ENCODE measurements at regions of chr18 and their contacts with region 1.

Region 1: DNA sequence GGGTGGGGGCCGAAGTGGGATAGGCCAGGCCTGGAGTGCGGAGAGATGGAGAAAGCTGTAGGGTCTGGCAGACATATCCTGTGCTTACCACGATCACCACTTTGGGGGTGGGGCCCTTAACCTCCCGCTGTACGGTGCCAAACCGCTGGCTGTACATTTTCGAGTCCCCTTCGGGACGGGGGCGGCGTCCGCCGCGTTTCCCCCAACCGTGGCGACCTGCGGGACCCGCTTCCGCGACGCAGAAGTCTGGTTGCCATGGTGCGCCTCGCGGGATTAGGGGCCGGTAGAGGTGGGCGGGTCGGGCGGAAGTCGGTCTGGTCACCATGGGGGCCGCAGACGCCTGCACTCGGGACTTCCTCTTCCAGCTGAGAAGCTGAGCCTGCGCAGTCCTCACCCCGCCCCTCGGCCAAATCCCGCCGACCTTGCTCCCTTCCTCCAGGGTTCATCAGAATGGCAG is at the start of gene CFAP53:
- DNase-seq: peak; percentile 95
- ATAC-seq: peak; percentile 90
- H3K4me3 Mint-ChIP-seq: peak within 1 kb of the TSS; percentile 73
- H3K27ac Mint-ChIP-seq: peak within 1 kb of the TSS; percentile 60
- H3K4me1 Mint-ChIP-seq: peaks cover 29% of the 10 kb centered on the region
- H3K27me3 Mint-ChIP-seq: peaks cover 9% of the 10 kb centered on the region
- total RNA-seq, gene CFAP53: 0.16 to 0.50 TPM

Region 2: DNA sequence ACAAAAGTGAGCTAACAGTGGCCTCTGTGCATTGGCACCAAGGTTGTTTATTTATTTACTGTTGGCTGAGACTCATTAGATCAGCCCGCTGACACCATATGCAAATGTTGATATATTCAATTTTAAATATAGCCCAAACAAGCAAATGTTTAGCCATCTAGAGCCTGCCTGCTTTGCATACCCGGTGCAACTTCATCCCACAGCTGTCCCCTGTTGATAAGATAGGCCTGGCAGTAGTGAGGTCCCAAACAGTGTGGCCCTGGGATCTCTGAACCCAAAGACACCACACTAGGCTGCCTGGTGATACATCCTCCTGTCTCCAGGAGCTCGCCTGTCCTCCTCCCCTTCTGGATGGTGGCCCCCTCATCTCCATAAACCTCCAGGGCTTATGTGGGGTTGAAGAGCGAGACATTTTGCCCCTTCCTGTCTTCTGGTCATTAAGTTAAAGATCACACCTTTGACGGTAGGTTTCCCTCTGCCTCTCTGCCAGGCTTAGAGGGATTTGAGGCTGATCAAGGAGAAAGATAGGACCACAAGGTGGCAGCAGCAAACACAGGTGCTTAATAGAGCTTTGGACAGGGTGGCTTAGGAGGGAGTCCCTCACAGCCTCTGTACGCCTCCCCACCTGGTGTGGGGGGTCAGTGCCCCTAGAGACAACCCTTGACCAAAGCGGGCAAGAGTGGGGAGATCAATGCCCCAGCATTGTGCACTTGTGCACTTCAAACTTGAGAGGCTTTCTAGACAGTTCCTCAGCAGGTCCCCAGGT is 47.7 kb before region 1 on chr18:
- CTCF ChIA-PET with region 1: interaction called, 21 read pairs
- DNase-seq: peak; percentile 54
- ATAC-seq: peak; percentile 55
- H3K4me3 Mint-ChIP-seq: no peak overlapping the region
- H3K27ac Mint-ChIP-seq: no peak overlapping the region
- H3K4me1 Mint-ChIP-seq: no peaks in the 10 kb centered on the region
- H3K27me3 Mint-ChIP-seq: peaks cover 30% of the 10 kb centered on the region

Region 3: GRCh38 chr18:50281295-50281971 is 15.2 kb after region 1 on chr18 and contains the start of gene MBD1:
- CTCF ChIA-PET with region 1: interaction called, 16 read pairs
- DNase-seq: peak; percentile 98
- ATAC-seq: peak; percentile 92
- H3K4me3 Mint-ChIP-seq: peak within 1 kb of the TSS; percentile 99
- H3K27ac Mint-ChIP-seq: peak within 1 kb of the TSS; percentile 95
- H3K4me1 Mint-ChIP-seq: peaks cover 54% of the 10 kb centered on the region
- H3K27me3 Mint-ChIP-seq: no peaks in the 10 kb centered on the region
- total RNA-seq, gene MBD1: 97.8 to 106 TPM

Region 4: GRCh38 chr18:50307738-50308470 is 41.6 kb after region 1 on chr18:
- CTCF ChIA-PET with region 1: interaction called, 12 read pairs
- DNase-seq: peak; percentile 96
- ATAC-seq: peak; percentile 100
- H3K4me3 Mint-ChIP-seq: peak overlapping the region; percentile 82
- H3K27ac Mint-ChIP-seq: peak overlapping the region; percentile 67
- H3K4me1 Mint-ChIP-seq: peaks cover 14% of the 10 kb centered on the region
- H3K27me3 Mint-ChIP-seq: peaks cover 30% of the 10 kb centered on the region